ENCODE measurements at regions of chrX and their contacts with region 1.

Region 1: DNA sequence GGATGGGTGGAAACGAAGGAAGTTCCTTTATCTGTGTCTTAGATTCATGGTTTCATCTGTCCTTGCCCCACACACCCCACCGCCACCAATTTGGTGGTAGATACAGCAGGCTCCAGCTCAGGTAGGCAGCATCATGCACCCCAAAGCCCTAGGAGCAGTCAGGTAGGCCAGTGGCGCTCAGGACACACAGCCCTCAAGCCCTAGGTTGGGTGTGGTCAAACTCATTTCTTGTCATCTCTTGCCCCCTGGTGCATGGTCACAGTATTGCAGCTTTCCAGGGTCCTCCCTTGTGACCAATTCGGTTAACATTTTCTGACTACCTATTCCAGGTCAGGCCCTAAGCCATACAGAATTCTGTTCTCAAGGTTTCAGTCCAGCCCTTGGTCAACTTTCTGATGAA is 14.5 kb upstream of the PRRG3 start:
- DNase-seq: no peak
- ATAC-seq: no peak
- H3K4me3 ChIP-seq: no peak overlapping the region
- H3K27ac ChIP-seq: no peak overlapping the region
- H3K4me1 ChIP-seq: no peaks in the 10 kb centered on the region
- H3K27me3 ChIP-seq: no peaks in the 10 kb centered on the region

Region 2: DNA sequence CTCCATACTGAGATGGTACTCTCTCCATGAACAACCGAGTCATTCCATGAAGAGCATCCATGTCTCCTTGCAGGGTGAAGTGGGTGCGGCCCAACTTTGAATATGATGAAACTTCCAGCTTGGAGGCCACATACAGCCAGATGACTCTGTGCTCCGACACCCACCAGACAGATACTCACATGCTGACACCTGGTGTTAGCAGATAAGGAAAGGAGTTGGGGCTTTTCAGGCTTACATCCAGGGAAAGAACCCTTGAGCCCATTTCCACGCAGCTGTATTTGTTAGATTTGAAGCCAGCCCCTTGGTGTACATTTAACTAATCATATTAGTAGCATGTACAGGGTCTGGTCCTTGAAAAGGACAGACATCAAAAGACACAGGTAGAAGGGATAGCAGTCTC is 47.6 kb before region 1 on chrX:
- intact Hi-C with region 1: loop called in 1 of 2 experiments (anchors 5 kb)
- DNase-seq: no peak
- ATAC-seq: no peak
- H3K4me3 ChIP-seq: no peak overlapping the region
- H3K27ac ChIP-seq: no peak overlapping the region
- H3K4me1 ChIP-seq: no peaks in the 10 kb centered on the region
- H3K27me3 ChIP-seq: no peaks in the 10 kb centered on the region

Region 3: GRCh38 chrX:152061083-152061482 is 380.3 kb after region 1 on chrX:
- intact Hi-C with region 1: no loop called
- DNase-seq: no peak
- ATAC-seq: no peak
- H3K4me3 ChIP-seq: no peak overlapping the region
- H3K27ac ChIP-seq: no peak overlapping the region
- H3K4me1 ChIP-seq: no peaks in the 10 kb centered on the region
- H3K27me3 ChIP-seq: no peaks in the 10 kb centered on the region